ENCODE measurements at regions of chr6 and their contacts with region 1.

Region 1: DNA sequence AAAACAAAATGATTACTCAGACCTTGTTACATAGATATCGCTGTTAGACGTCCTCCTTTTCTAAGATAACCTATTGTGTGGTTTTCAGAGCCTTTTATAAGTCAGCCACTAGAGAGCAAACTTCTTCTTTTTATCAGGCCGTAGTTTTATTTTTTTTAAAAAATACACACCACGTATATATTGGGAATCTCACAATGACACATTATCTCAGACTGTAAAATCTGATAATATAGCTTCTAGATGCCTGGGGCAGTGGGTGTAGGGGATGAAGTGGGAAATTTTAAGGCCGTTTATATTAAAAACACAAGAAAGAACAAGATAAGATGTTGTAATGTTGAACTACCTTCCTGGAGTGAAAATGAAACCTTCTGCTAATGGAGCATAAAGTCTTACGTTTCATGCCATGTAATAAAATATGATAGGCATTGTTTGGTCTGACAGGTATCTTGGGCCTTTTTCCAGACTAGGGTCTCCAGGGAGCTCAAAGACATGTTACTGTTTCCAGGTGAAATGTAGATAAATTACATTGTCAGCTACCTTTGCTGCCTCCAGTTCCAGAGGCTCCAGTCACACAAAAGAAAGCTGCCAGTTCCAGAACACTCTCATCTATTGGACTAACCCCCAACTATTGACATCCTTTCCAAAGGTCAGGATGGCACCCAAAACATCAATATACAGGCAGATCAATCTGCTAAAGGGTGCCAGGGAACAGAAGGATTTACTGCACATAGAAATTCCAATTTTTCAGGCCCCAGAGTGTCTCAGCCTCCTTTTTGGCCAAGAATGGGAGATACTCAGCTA is 130.2 kb upstream of the AKIRIN2 start:
- DNase-seq: no peak
- ATAC-seq: peak; percentile 77
- H3K4me3 Mint-ChIP-seq: peak overlapping the region; percentile 85
- H3K27ac Mint-ChIP-seq: peak overlapping the region; percentile 78
- H3K4me1 Mint-ChIP-seq: peaks cover 11% of the 10 kb centered on the region
- H3K27me3 Mint-ChIP-seq: no peaks in the 10 kb centered on the region
- CTCF ChIP-seq: no peak

Region 2: DNA sequence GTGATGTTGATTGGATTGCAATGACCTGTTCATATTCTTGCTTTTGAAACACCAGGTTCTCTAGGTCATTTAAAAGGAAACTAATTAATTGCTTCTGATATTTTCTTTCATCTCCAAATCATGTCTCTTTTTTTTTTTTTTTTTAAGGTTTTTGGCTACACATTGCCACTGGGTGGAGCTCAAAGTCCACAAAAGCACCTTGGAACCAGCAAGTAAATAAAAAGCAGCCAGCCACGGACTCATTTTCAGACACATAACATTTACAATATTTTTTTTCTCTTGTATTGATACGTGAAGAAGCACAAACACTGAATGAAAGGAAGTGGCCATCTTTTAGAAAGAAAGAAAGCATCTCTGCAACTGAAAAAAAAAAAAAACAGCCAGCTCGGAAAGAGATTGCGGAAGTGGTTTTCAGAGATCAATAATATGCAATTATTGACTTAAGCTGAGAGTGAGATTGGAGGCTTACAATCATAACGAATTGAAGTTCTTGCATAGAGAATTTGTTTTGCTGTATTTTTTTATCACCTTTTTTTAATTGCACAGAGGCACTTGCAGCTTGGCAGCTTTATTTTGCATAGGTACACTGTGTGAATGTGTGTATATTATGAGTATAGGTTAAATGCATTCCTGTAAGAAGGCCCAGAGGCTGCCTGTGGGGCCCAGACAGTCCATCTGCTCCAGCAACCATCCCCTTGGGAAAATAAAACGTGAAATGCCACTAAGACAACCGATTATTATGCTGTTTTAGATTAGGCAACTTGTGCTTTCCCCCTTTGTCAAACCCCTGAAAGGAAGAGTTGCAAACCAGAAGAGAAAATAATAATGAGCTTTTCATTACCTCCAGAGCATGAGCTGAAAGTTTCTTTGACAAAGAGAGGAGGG is 765.5 kb before region 1 on chr6:
- CTCF ChIA-PET with region 1: no interaction called
- POLR2A ChIA-PET with region 1: no interaction called
- intact Hi-C with region 1: loop called (anchors 1 kb)
- DNase-seq: no peak
- ATAC-seq: peak; percentile 25
- H3K4me3 Mint-ChIP-seq: peak overlapping the region; percentile 54
- H3K27ac Mint-ChIP-seq: no peak overlapping the region
- H3K4me1 Mint-ChIP-seq: peaks cover 5% of the 10 kb centered on the region
- H3K27me3 Mint-ChIP-seq: no peaks in the 10 kb centered on the region
- CTCF ChIP-seq: no peak

Region 3: DNA sequence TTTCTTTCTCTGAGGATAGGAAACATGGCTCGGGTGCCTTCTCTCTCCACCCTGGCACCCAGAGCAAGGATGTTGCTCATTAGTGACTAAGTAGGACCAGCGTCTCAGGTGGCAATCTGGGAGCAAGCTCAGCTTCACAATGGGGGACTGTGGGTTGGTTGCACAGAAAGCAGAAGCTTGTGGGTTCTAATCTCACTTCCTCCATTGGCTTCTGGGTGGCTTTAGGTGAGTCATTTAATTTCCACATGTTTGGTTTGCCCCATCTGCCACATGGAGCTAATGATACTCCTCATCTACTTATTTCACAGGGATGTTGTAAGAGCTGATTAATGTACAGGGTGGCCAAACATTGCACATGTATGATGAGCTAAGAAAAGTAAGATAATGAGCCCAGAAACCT is 75.4 kb before region 1 on chr6:
- CTCF ChIA-PET with region 1: interaction called, 3 read pairs
- POLR2A ChIA-PET with region 1: no interaction called
- intact Hi-C with region 1: loop called (anchors 2 kb)
- DNase-seq: peak; percentile 41
- ATAC-seq: peak; percentile 91
- H3K4me3 Mint-ChIP-seq: peak overlapping the region; percentile 46
- H3K27ac Mint-ChIP-seq: peak overlapping the region; percentile 91
- H3K4me1 Mint-ChIP-seq: peaks cover 42% of the 10 kb centered on the region
- H3K27me3 Mint-ChIP-seq: no peaks in the 10 kb centered on the region
- CTCF ChIP-seq: no peak

Region 4: GRCh38 chr6:88165844-88166492 is 333.7 kb after region 1 on chr6 and contains the start of gene CNR1:
- CTCF ChIA-PET with region 1: interaction called, 7 read pairs
- POLR2A ChIA-PET with region 1: no interaction called
- intact Hi-C with region 1: loop called (anchors 1 kb)
- DNase-seq: no peak
- ATAC-seq: peak; percentile 59
- H3K4me3 Mint-ChIP-seq: peak within 1 kb of the TSS; percentile 91
- H3K27ac Mint-ChIP-seq: peak within 1 kb of the TSS; percentile 87
- H3K4me1 Mint-ChIP-seq: peaks cover 34% of the 10 kb centered on the region
- H3K27me3 Mint-ChIP-seq: peaks cover 15% of the 10 kb centered on the region
- CTCF ChIP-seq: no peak
- total RNA-seq, gene CNR1: 2.7 and 4.4 TPM in 2 replicates

Region 5: DNA sequence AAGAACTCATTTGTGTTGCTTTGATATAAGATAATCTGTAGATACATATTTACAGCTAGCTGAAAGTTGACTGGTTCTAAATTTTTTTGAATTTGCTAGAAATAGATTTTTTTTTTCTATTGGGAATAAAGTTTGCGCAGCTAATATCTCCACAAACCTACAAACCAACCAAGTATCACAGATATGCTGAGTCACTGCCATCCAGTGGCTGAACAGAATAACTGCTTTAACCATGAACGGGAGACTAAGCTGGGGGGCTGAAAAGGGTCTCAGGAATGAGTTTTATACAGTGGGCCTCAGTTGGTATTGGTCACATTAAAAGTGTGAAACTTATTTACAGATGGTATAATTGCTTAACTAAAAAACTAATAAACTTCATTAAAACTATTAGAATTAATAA is 660.6 kb after region 1 on chr6:
- CTCF ChIA-PET with region 1: no interaction called
- POLR2A ChIA-PET with region 1: no interaction called
- intact Hi-C with region 1: loop called (anchors 10 kb)
- DNase-seq: no peak
- ATAC-seq: no peak
- H3K4me3 Mint-ChIP-seq: no peak overlapping the region
- H3K27ac Mint-ChIP-seq: no peak overlapping the region
- H3K4me1 Mint-ChIP-seq: peaks cover 25% of the 10 kb centered on the region
- H3K27me3 Mint-ChIP-seq: no peaks in the 10 kb centered on the region
- CTCF ChIP-seq: no peak

Region 6: DNA sequence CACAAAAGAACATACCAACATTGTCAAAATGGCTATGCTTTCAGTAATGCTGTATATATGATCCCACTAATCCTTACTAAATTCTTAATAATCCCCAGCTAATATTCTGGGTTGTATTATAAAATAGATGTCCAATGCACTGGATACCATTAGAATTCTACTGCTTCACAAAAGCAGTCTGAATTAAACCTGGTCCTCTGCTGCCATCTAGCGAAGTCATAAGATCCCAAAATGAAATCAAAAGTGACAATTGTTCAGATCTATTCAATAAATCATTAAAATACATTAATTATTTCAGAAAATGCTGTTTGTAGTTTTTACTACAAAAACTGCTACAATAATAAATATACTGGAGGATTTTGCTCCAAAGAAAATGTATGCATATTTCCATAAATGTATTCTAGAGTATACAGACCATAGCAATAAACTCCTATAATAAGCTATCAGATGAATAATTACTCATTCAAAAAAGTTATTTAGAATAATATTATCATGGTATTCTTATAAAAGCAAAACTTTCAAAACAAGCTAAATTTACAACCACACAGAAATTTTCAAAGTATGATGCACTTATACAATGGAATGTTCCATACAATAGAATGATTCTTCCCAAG is 1038.6 kb after region 1 on chr6:
- CTCF ChIA-PET with region 1: interaction called, 6 read pairs
- POLR2A ChIA-PET with region 1: no interaction called
- intact Hi-C with region 1: loop called (anchors 1 kb)
- DNase-seq: no peak
- ATAC-seq: peak; percentile 42
- H3K4me3 Mint-ChIP-seq: no peak overlapping the region
- H3K27ac Mint-ChIP-seq: no peak overlapping the region
- H3K4me1 Mint-ChIP-seq: peaks cover 10% of the 10 kb centered on the region
- H3K27me3 Mint-ChIP-seq: no peaks in the 10 kb centered on the region
- CTCF ChIP-seq: no peak